Dorsolateral prefrontal cortex (tissue), 120 donors: ENCODE measurements at regions of chr3 and their contacts with region 1.

Region 1: GRCh38 chr3:16183601-16184270 is 9.3 kb downstream of the GALNT15 start:
- DNase-seq: peak in 1 of 10 donors; percentile 74
- H3K4me3 ChIP-seq: no peak overlapping the region
- H3K27ac ChIP-seq: peak overlapping the region in 26 of 59 donors; percentile 8 to 83 (median 38)
- H3K27me3 ChIP-seq: no peaks in the 10 kb centered on the region
- CTCF ChIP-seq: no peak

Region 2: DNA sequence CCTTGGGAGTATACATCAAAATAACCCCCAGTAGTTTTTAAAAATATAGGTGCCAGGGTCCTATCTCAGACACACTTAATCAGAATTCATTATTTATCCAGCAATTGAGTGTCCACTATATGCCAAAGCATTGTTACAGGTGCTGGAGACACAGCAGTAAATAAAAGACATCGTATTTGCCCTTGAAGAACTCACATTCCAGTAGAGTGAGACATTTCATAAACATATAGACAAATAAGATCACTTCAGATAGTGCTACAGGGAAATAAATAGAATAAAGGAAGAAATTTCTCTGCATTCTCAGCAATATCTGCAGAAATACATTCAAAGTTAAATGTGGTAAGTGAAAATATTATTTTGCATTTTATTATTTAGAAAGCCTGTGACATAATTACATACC is 351.8 kb before region 1 on chr3:
- intact Hi-C with region 1: loop called in 1 of 2 experiments (anchors 5 kb)
- DNase-seq: no peak
- H3K4me3 ChIP-seq: no peak overlapping the region
- H3K27ac ChIP-seq: no peak overlapping the region
- H3K27me3 ChIP-seq: no peaks in the 10 kb centered on the region
- CTCF ChIP-seq: no peak

Region 3: DNA sequence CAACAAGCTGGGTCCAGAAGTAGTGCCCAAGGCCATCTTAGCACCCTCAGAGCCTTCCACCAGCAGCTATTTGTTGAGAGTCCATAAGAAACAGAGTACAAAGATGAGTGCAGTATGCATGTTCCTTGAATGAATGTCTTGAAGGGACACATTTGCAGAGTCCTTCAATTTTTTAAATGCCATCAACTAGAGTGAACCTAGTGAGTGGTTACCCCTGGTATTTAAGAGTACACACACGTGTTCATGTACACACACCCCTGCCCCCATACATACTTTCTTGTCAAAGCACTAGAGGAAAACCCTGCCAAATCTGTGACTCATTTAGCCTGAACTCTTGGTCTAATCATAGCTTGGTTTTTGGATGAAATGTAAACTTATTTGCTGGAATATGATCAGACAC is 93.7 kb before region 1 on chr3:
- intact Hi-C with region 1: no loop called
- DNase-seq: no peak
- H3K4me3 ChIP-seq: no peak overlapping the region
- H3K27ac ChIP-seq: no peak overlapping the region
- H3K27me3 ChIP-seq: peaks cover 0 to 3% (median 0%) of the 10 kb centered on the region in 45 donors
- CTCF ChIP-seq: no peak